ENCODE measurements at regions of chr22 and their contacts with region 1.

Region 1: DNA sequence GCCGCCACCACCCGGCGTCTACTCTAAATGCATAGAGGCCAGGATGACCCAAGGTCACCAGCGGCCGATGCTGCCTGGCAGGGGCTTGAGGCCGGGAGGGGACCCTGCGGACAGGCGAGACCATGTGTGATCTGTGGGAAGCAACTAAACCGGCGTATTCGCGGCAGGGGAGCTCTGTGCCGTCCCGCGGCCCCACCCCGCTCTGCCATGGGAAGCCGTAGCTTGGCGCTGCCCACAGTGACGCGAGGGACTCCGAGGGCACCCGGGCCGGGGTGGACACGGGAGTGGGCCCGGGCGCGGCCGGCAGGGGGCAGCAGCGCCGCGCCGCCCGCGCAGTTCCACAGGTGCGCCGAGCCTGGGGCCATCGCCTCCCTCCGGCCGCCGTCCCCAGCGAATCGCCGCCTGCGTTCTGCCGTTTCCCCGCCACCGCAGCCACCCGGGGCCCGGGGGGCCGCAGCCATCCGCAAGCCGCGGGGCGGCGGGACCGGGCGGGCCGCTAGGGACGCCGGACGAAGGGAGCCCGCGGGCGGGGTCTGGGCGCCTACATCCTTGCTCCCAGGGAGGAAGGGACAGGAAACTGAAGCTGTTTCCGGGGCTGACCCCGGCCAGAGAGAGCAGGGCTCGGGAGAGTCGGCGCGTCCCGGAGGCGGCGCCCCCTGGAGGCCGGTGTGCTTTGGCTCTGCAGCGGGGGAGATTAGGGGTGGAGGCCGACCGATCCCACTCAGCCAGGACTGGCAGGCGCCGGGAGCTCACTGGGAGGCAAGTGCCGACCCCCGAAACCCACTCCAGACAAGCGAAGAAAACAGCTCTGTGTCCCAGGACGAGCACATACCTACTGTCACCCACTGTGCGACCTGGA is 12.5 kb upstream of the HDHD5 start:
- DNase-seq: peak; percentile 73 to 87 (median 80)
- H3K4me3 ChIP-seq: peak overlapping the region; percentile 43 to 86 (median 69)
- H3K27ac ChIP-seq: peak overlapping the region in 1 of 2 experiments; percentile 66
- H3K4me1 ChIP-seq: peaks cover 0 to 16% (median 7%) of the 10 kb centered on the region in 4 experiments
- H3K27me3 ChIP-seq: peaks cover 0 to 2% (median 0%) of the 10 kb centered on the region in 5 experiments

Region 2: GRCh38 chr22:17077255-17077654 is 94.3 kb before region 1 on chr22:
- CTCF ChIA-PET with region 1: interaction called, 66 read pairs
- POLR2A ChIA-PET with region 1: interaction called, 4 read pairs
- DNase-seq: no peak
- H3K4me3 ChIP-seq: no peak overlapping the region
- H3K27ac ChIP-seq: no peak overlapping the region
- H3K4me1 ChIP-seq: peaks cover 3 to 17% (median 14%) of the 10 kb centered on the region in 4 experiments
- H3K27me3 ChIP-seq: peaks cover 0 to 2% (median 0%) of the 10 kb centered on the region in 5 experiments

Region 3: DNA sequence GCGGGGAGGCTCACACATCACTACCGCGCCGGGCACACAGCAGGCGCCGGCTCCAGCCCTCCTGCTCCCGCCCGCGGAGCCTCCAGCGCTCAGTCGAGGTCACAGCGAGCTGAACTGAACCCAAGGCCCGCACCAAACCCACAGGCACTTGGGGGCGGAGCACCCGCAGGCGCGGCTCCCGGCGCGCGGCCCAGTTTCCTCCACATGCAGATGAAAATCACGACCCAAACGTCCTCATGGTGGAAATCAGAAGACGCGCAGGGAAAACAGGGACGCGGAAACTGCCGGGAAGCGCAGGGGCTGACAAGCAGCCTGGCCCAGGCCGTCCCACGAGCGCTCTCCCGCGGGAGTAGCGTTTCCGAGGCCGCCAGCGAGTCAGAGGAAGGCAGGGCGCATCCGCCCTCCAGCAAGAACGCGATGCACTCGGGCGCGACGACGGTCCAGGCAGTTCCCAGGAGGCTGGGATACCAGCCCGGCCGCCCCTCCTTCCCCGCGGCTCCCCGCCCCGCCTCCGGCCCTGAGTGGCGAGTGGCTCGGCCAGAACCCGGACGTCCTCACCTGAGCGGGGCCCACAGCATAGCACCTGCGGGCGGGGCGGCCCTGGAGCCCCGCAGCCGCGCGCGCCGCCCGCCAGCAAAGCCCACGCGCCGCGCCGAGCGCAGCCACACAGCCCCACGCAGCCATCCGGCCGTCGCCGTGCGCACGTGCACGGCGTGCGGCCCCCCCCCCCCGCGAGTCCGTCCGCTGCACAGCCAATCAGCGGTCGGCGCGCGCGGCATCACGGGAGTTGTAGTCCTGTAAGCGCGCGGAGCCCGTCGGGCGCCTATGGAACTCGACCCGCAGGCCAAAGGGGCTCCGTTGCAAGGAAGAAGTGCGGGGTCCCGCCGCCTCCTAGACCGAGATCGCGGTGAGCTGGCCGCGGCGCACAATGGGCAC is 12.7 kb before region 1 on chr22 and contains the start of gene HDHD5:
- CTCF ChIA-PET with region 1: interaction called, 37 read pairs
- POLR2A ChIA-PET with region 1: no interaction called
- DNase-seq: peak; percentile 81 to 89 (median 87)
- H3K4me3 ChIP-seq: peak within 1 kb of the TSS; percentile 26 to 81 (median 59)
- H3K27ac ChIP-seq: no peak within 1 kb of the TSS
- H3K4me1 ChIP-seq: peaks cover 0 to 23% (median 18%) of the 10 kb centered on the region in 4 experiments
- H3K27me3 ChIP-seq: no peaks in the 10 kb centered on the region

Region 4: DNA sequence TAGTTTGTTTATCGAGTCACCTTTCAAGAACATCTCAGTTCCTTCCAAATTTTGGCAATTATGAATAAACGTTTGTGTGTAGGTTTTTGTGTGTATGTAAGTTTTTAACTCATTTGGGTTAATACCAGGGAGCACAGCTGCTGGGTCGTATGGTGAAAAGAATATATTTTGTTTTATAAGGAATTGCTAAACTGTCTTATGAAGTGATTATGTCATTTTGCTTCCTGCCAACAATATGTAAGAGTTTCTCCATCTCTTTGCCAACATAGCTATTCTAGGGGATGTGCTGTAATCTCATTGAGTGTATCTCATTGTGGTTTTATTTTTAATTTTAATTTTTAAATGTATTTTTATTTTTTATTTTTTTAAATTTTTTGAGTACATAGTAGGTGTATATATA is 494.3 kb after region 1 on chr22:
- CTCF ChIA-PET with region 1: no interaction called
- POLR2A ChIA-PET with region 1: no interaction called
- DNase-seq: no peak
- H3K4me3 ChIP-seq: no peak overlapping the region
- H3K27ac ChIP-seq: no peak overlapping the region
- H3K4me1 ChIP-seq: peaks cover 0 to 2% (median 0%) of the 10 kb centered on the region in 4 experiments
- H3K27me3 ChIP-seq: no peaks in the 10 kb centered on the region

Measured in common myeloid progenitor, CD34-positive (primary cell).